ENCODE measurements at regions of chr10 and their contacts with region 1.

Region 1: GRCh38 chr10:25174461-25175230 is at the start of gene GPR158:
- DNase-seq: peak; percentile 89
- ATAC-seq: peak; percentile 83
- H3K4me3 Mint-ChIP-seq: peak within 1 kb of the TSS; percentile 84
- H3K27ac Mint-ChIP-seq: no peak within 1 kb of the TSS
- H3K4me1 Mint-ChIP-seq: peaks cover 17% of the 10 kb centered on the region
- H3K27me3 Mint-ChIP-seq: peaks cover 60% of the 10 kb centered on the region
- CTCF ChIP-seq: no peak
- total RNA-seq, gene GPR158: 0.34 to 0.63 TPM (median 0.44 TPM) in 3 replicates

Region 2: GRCh38 chr10:25226775-25227682 is 52.4 kb after region 1 on chr10:
- CTCF ChIA-PET with region 1: interaction called, 12 read pairs
- POLR2A ChIA-PET with region 1: no interaction called
- DNase-seq: peak; percentile 41
- ATAC-seq: peak; percentile 83
- H3K4me3 Mint-ChIP-seq: no peak overlapping the region
- H3K27ac Mint-ChIP-seq: no peak overlapping the region
- H3K4me1 Mint-ChIP-seq: no peaks in the 10 kb centered on the region
- H3K27me3 Mint-ChIP-seq: no peaks in the 10 kb centered on the region
- CTCF ChIP-seq: no peak; the same call in 1 of the 2 replicates

Region 3: GRCh38 chr10:25336330-25336729 is 161.7 kb after region 1 on chr10:
- CTCF ChIA-PET with region 1: no interaction called
- POLR2A ChIA-PET with region 1: no interaction called
- DNase-seq: no peak
- ATAC-seq: no peak
- H3K4me3 Mint-ChIP-seq: no peak overlapping the region
- H3K27ac Mint-ChIP-seq: no peak overlapping the region
- H3K4me1 Mint-ChIP-seq: peaks cover 7% of the 10 kb centered on the region
- H3K27me3 Mint-ChIP-seq: no peaks in the 10 kb centered on the region
- CTCF ChIP-seq: no peak